Testis (tissue), 5 donors: ENCODE measurements at regions of chr17 and their contacts with region 1.

Region 1: DNA sequence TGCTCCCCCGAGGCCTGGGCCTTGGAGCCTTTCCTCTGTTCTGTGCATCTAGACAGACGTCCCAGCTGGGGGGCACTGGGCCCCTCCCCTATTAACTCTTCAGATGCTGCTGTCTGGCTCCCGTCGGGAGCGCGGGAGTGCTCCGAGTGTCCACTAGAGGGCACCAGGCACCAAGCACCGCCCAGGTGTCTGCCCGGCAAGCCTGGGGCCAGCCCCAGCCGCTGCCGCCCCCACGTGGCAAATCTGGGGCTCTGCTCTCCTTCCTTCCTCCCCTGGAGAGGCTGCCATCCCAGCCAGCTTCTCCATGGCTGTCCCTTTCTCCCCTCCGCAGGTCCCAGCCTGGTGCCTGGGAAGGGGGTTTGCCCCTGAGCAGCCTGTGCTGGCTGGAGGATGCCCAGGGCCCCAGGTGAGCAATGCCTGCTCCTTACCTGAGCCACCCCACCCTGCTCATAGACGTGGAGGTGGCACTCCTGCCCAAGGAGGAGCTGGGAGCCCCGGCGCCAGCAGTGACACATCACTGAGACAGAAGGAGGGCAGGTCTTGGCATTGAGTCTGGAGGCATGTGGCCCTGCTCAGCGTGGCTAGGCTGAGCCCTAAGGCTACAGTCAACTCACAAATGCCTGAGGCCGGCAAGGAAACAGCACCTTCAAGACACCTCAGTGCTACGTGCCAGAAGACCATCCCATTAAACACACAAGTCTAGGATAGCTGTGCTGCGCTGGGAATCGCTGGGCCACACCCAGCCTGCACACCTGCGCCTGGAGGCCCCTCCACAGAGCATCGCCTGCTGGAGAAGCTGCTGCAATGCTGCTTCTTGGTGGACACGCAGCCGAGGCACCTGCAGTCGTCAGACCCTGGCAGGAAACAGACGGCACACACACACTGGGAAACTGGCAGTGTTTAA is 19.7 kb downstream of the TMEM235 start:
- DNase-seq: peak; percentile 85
- H3K4me3 ChIP-seq: no peak overlapping the region
- H3K27ac ChIP-seq: no peak overlapping the region
- H3K4me1 ChIP-seq: peaks cover 6% of the 10 kb centered on the region
- H3K27me3 ChIP-seq: no peaks in the 10 kb centered on the region
- CTCF ChIP-seq: peak; percentile 95 to 98 (median 95)
- POLR2A ChIP-seq: no peak

Region 2: GRCh38 chr17:78112518-78113226 is 138.5 kb before region 1 on chr17:
- intact Hi-C with region 1: loop called (anchors 10 kb)
- DNase-seq: peak; percentile 77
- H3K4me3 ChIP-seq: no peak overlapping the region
- H3K27ac ChIP-seq: no peak overlapping the region
- H3K4me1 ChIP-seq: peaks cover 8% of the 10 kb centered on the region
- H3K27me3 ChIP-seq: no peaks in the 10 kb centered on the region
- CTCF ChIP-seq: peak; percentile 96 to 99 (median 98)
- POLR2A ChIP-seq: no peak

Region 3: DNA sequence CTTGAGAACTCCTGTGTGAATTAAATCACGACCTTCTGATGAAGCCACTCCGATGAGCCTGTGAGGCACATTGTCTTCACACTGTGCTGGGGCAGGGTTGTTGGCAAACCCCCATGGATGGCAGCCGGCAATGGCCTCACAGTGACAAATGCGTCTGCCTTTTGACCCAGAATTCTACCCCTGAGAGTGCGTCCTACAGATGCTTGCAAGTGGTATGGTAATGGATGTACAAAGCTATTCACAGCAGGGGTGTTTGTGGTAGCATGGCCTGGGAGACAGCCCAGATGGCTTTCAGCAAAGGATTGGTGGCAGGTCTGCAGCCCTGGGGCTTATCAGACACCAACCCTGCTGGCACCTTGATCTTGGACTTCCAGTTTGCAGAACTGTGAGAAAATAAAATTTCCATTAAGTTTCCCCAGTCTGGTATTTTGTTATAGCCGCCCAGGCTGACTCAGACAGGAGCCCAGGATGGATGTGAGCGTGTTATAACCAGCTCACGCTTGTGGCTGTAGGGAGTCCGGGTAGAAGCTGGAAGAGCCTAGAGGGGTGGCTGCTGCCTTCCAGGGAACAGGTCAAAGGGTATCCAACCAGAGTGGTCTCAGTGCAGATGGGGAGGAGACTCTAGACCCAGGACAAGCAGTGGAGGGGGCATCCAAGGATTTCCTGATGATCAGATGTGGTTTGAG is 53.9 kb before region 1 on chr17:
- intact Hi-C with region 1: no loop called
- DNase-seq: no peak
- H3K4me3 ChIP-seq: no peak overlapping the region
- H3K27ac ChIP-seq: no peak overlapping the region
- H3K4me1 ChIP-seq: no peaks in the 10 kb centered on the region
- H3K27me3 ChIP-seq: no peaks in the 10 kb centered on the region
- CTCF ChIP-seq: no peak
- POLR2A ChIP-seq: no peak